H1 (cell line): ENCODE measurements at regions of chr5 and their contacts with region 1.

Region 1: DNA sequence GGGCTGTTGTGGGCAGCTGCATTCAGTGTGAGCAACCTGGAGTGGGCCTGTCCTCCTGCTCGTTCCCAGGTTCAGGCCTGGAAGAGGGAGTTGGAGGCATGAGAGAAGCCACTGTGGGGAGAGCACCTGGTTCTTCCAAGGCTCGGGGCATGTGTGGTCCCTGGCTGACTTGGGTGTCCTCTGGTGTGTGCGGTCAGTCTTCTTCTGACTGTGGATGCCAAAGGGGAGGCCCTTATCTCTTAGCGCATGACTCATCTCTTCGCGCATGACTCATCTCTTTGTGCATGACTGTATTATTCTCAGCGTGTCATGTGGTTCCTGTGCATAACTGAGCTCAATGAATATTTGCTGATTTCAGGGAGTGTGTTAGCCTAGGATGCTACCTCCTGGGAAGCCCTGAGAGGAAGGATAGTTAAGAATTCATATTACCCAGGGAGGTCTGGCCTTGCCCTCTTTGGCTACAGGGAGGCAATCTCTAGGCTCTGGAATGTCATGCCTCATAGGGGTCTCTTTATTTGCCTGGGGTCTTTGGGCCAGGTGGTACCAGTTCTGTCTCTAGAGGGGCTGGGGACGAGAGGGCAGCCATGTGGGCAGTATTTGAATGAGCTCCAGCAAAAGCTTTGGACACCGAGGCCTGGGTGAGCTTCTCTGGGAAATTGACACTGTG is 188.7 kb downstream of the HSPA4 start:
- DNase-seq: no peak
- H3K4me3 ChIP-seq: no peak overlapping the region
- H3K27ac ChIP-seq: no peak overlapping the region
- H3K4me1 ChIP-seq: peaks cover 0 to 8% (median 0%) of the 10 kb centered on the region in 4 experiments; a peak in 2 of 7 replicates
- H3K27me3 ChIP-seq: no peaks in the 10 kb centered on the region
- CTCF ChIP-seq: no peak
- EP300 ChIP-seq: no peak
- POLR2A ChIP-seq: no peak
- RAD21 ChIP-seq: no peak

Region 2: GRCh38 chr5:133179405-133179804 is 61.2 kb before region 1 on chr5:
- CTCF ChIA-PET with region 1: no interaction called
- POLR2A ChIA-PET with region 1: no interaction called
- DNase-seq: no peak
- H3K4me3 ChIP-seq: no peak overlapping the region
- H3K27ac ChIP-seq: no peak overlapping the region
- H3K4me1 ChIP-seq: no peaks in the 10 kb centered on the region
- H3K27me3 ChIP-seq: no peaks in the 10 kb centered on the region
- CTCF ChIP-seq: no peak
- EP300 ChIP-seq: no peak
- POLR2A ChIP-seq: no peak
- RAD21 ChIP-seq: no peak

Region 3: GRCh38 chr5:133225671-133226152 is 14.8 kb before region 1 on chr5:
- CTCF ChIA-PET with region 1: interaction called, 41 read pairs
- POLR2A ChIA-PET with region 1: interaction called, 3 read pairs
- DNase-seq: no peak
- H3K4me3 ChIP-seq: no peak overlapping the region
- H3K27ac ChIP-seq: no peak overlapping the region
- H3K4me1 ChIP-seq: peaks cover 0 to 5% (median 2%) of the 10 kb centered on the region in 4 experiments; a peak in 3 of 7 replicates
- H3K27me3 ChIP-seq: no peaks in the 10 kb centered on the region
- CTCF ChIP-seq: no peak
- EP300 ChIP-seq: no peak
- POLR2A ChIP-seq: no peak
- RAD21 ChIP-seq: no peak